Aorta (tissue), 5 donors: ENCODE measurements at regions of chr3 and their contacts with region 1.

Region 1: GRCh38 chr3:112411425-112411824 is 78.5 kb downstream of the CD200 start:
- DNase-seq: no peak
- ATAC-seq: peak; percentile 81
- H3K4me3 ChIP-seq: no peak overlapping the region
- H3K27ac ChIP-seq: peak overlapping the region; percentile 86 to 88
- H3K4me1 ChIP-seq: peaks cover 2 to 8% of the 10 kb centered on the region in 2 donors
- H3K27me3 ChIP-seq: no peaks in the 10 kb centered on the region

Region 2: DNA sequence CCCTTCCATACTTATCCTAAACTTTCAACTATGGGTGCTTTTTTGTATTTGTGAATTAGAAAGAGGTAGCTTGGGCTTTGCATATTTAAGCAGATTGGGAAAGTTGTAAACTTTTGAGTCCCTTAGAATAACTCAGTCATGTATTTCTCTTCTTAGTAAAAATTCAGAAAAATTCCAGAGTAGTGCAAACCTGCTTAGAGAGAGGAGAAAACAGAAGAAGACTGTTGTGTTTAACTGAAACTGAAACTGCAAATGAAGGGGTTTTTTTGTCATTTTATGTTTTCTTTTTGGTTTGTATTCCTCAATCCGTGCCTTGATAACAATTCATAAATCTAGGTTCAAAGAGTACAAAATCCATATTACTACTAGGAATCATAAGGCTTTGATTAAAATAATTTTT is 47.1 kb before region 1 on chr3:
- intact Hi-C with region 1: loop called in 1 of 2 experiments (anchors 5 kb)
- DNase-seq: no peak
- ATAC-seq: no peak
- H3K4me3 ChIP-seq: no peak overlapping the region
- H3K27ac ChIP-seq: peak overlapping the region; percentile 1 to 60
- H3K4me1 ChIP-seq: peaks cover 4 to 5% of the 10 kb centered on the region in 2 donors
- H3K27me3 ChIP-seq: no peaks in the 10 kb centered on the region

Region 3: GRCh38 chr3:112390783-112391641 is 20.4 kb before region 1 on chr3:
- intact Hi-C with region 1: loop called in 1 of 2 experiments (anchors 2 kb)
- DNase-seq: no peak
- ATAC-seq: peak; percentile 57
- H3K4me3 ChIP-seq: no peak overlapping the region
- H3K27ac ChIP-seq: peak overlapping the region; percentile 81 to 100
- H3K4me1 ChIP-seq: peaks cover 4 to 10% of the 10 kb centered on the region in 2 donors
- H3K27me3 ChIP-seq: no peaks in the 10 kb centered on the region